H1 (cell line): ENCODE measurements at regions of chr10 and their contacts with region 1.

Region 1: GRCh38 chr10:119686439-119687191 is 35.4 kb downstream of the BAG3 start:
- DNase-seq: peak; percentile 36 to 86
- H3K4me3 ChIP-seq: peak overlapping the region; percentile 38 to 69 (median 50)
- H3K27ac ChIP-seq: peak overlapping the region; percentile 62; the same call in 1 of the 2 replicates
- H3K4me1 ChIP-seq: peaks cover 3 to 16% (median 14%) of the 10 kb centered on the region in 4 experiments; a peak in 6 of 7 replicates
- H3K27me3 ChIP-seq: no peaks in the 10 kb centered on the region
- CTCF ChIP-seq: peak; percentile 79 to 95 (median 85)
- EP300 ChIP-seq: no peak
- POLR2A ChIP-seq: no peak
- RAD21 ChIP-seq: peak; percentile 90 to 92

Region 2: GRCh38 chr10:119608316-119609155 is 78.1 kb before region 1 on chr10:
- CTCF ChIA-PET with region 1: interaction called, 14 read pairs
- POLR2A ChIA-PET with region 1: no interaction called
- DNase-seq: peak in 1 of 2 experiments; percentile 64
- H3K4me3 ChIP-seq: no peak overlapping the region
- H3K27ac ChIP-seq: no peak overlapping the region
- H3K4me1 ChIP-seq: no peaks in the 10 kb centered on the region
- H3K27me3 ChIP-seq: no peaks in the 10 kb centered on the region
- CTCF ChIP-seq: peak; percentile 69 to 82 (median 76)
- EP300 ChIP-seq: no peak
- POLR2A ChIP-seq: no peak
- RAD21 ChIP-seq: peak; percentile 79 to 85

Region 3: DNA sequence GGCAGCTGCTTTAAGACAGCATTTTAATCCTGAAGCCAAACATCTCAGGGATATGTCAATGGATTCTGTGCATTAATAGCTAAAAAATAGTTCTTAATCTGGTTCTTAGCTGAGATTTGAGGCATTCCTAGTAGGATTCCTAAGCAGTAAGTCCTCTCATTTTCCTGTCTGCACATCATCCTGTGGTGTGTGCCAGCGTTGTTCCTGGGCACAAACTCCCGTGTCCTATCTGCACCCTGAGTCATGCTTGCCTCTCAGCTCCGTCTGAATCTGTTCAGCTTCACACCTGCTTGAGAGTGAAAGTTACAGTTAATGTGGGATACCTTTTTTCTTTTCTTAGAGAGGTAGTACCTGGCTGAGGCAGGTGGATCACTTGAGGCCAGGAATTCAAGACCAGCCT is 15.9 kb before region 1 on chr10:
- CTCF ChIA-PET with region 1: interaction called, 19 read pairs
- POLR2A ChIA-PET with region 1: interaction called, 11 read pairs
- DNase-seq: no peak
- H3K4me3 ChIP-seq: no peak overlapping the region
- H3K27ac ChIP-seq: no peak overlapping the region
- H3K4me1 ChIP-seq: peaks cover 10 to 17% (median 13%) of the 10 kb centered on the region in 4 experiments
- H3K27me3 ChIP-seq: no peaks in the 10 kb centered on the region
- CTCF ChIP-seq: no peak
- EP300 ChIP-seq: no peak
- POLR2A ChIP-seq: no peak
- RAD21 ChIP-seq: no peak

Region 4: DNA sequence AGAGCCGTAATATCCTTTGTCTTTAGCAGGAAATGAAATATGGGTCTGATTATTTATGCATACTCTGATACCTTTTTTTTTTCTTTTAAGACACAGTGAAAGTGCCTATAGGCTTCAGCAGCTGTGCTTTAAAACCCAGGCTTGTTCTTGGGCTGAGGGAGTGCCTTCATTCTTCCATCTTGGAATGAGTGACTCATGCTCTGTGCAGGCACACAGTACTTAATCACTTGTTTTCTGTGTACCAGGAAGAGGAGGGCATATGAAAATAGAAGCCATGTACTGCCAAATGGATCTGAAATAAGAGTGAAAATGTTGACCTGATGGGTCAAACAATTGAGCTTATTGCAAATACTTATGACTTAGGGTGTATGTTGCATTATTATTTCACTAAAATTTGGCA is 51.2 kb after region 1 on chr10:
- CTCF ChIA-PET with region 1: interaction called, 25 read pairs
- POLR2A ChIA-PET with region 1: interaction called, 6 read pairs
- DNase-seq: no peak
- H3K4me3 ChIP-seq: no peak overlapping the region
- H3K27ac ChIP-seq: no peak overlapping the region
- H3K4me1 ChIP-seq: peaks cover 0 to 15% (median 6%) of the 10 kb centered on the region in 4 experiments; a peak in 3 of 7 replicates
- H3K27me3 ChIP-seq: no peaks in the 10 kb centered on the region
- CTCF ChIP-seq: no peak
- EP300 ChIP-seq: no peak
- POLR2A ChIP-seq: no peak
- RAD21 ChIP-seq: no peak

Region 5: GRCh38 chr10:119750391-119751230 is 64.0 kb after region 1 on chr10:
- CTCF ChIA-PET with region 1: interaction called, 40 read pairs
- POLR2A ChIA-PET with region 1: interaction called, 4 read pairs
- DNase-seq: peak in 1 of 2 experiments; percentile 69
- H3K4me3 ChIP-seq: no peak overlapping the region
- H3K27ac ChIP-seq: no peak overlapping the region
- H3K4me1 ChIP-seq: peaks cover 0 to 4% (median 2%) of the 10 kb centered on the region in 4 experiments; a peak in 2 of 7 replicates
- H3K27me3 ChIP-seq: no peaks in the 10 kb centered on the region
- CTCF ChIP-seq: peak; percentile 74 to 99 (median 83)
- EP300 ChIP-seq: no peak
- POLR2A ChIP-seq: no peak
- RAD21 ChIP-seq: peak; percentile 98 to 99

Region 6: GRCh38 chr10:119817991-119818888 is 131.6 kb after region 1 on chr10:
- CTCF ChIA-PET with region 1: interaction called, 16 read pairs
- POLR2A ChIA-PET with region 1: interaction called, 27 read pairs
- DNase-seq: peak; percentile 95 to 96
- H3K4me3 ChIP-seq: peak overlapping the region; percentile 54 to 90 (median 74)
- H3K27ac ChIP-seq: peak overlapping the region; percentile 90
- H3K4me1 ChIP-seq: peaks cover 0 to 11% (median 4%) of the 10 kb centered on the region in 4 experiments; a peak in 5 of 7 replicates
- H3K27me3 ChIP-seq: no peaks in the 10 kb centered on the region
- CTCF ChIP-seq: peak; percentile 56 to 65 (median 58)
- EP300 ChIP-seq: no peak
- POLR2A ChIP-seq: peak; percentile 95 to 96
- RAD21 ChIP-seq: peak; percentile 44 to 53